ENCODE measurements at regions of chr19 and their contacts with region 1.

Region 1: GRCh38 chr19:49676690-49677231 is 310 bp upstream of the PRMT1 start:
- DNase-seq: peak; percentile 99 to 100
- H3K4me3 ChIP-seq: peak overlapping the region; percentile 82 to 99 (median 86)
- H3K27ac ChIP-seq: peak overlapping the region; percentile 100
- H3K4me1 ChIP-seq: peaks cover 2 to 19% (median 11%) of the 10 kb centered on the region in 4 experiments
- H3K27me3 ChIP-seq: no peaks in the 10 kb centered on the region
- CTCF ChIP-seq: no peak
- EP300 ChIP-seq: no peak
- POLR2A ChIP-seq: no peak
- RAD21 ChIP-seq: no peak

Region 2: GRCh38 chr19:49497047-49497788 is 179.5 kb before region 1 on chr19:
- CTCF ChIA-PET with region 1: interaction called, 3 read pairs
- POLR2A ChIA-PET with region 1: interaction called, 15 read pairs
- DNase-seq: no peak
- H3K4me3 ChIP-seq: peak overlapping the region; percentile 91 to 99 (median 98)
- H3K27ac ChIP-seq: peak overlapping the region; percentile 85
- H3K4me1 ChIP-seq: peaks cover 0 to 32% (median 23%) of the 10 kb centered on the region in 4 experiments; a peak in 6 of 7 replicates
- H3K27me3 ChIP-seq: no peaks in the 10 kb centered on the region
- CTCF ChIP-seq: no peak
- EP300 ChIP-seq: no peak
- POLR2A ChIP-seq: peak in 1 of 2 experiments; percentile 77; a peak in 2 of 3 replicates
- RAD21 ChIP-seq: no peak

Region 3: DNA sequence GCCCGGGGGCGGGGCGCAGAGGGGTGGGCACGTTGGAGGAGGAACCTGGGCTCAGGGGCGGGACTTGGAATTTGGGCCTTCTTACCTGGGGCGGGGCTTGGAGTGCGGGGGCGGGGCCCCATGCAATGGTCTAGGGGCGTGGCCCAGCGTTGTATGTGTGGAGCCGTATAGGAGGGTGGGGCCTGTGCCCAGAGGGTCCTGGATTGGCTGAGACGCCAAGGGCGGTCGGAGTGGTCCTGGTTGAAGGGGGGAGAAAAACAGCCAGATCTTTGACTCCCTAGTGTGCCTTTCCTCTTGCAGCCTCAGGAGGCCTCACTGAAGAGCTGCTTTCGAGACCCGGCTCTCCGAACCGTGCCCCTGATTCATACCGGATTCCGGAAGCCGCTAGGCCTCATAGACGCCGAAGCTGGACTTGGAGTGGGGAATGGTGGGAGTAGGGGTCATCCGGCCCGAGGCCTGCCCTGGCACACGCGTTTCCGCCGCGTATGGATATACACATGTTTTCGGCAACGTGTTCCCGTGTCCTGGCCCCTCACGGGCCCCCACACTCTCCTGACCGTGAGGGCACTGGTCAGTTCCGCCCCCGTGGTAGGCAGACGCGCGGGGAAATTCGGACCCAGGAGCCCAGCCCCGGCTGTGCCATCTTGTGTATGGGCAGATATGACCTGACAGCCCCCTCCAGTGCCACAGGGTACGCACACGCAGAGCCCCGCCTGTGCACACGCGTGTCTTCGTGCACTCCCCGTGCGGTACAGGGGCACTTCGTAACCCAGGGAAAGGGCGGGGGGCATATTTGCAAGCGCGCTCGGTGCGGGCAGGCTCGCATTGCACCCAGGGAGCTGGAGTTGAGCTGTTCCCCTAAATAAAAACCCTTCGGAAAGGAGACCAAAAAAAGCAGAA is 86.4 kb before region 1 on chr19:
- CTCF ChIA-PET with region 1: interaction called, 5 read pairs
- POLR2A ChIA-PET with region 1: interaction called, 29 read pairs
- DNase-seq: peak; percentile 98 to 99
- H3K4me3 ChIP-seq: peak overlapping the region; percentile 83 to 100 (median 93)
- H3K27ac ChIP-seq: peak overlapping the region; percentile 84
- H3K4me1 ChIP-seq: peaks cover 4 to 10% (median 5%) of the 10 kb centered on the region in 4 experiments; a peak in 6 of 7 replicates
- H3K27me3 ChIP-seq: no peaks in the 10 kb centered on the region
- CTCF ChIP-seq: peak in 1 of 3 experiments; percentile 8; a peak in 1 of 4 replicates
- EP300 ChIP-seq: no peak
- POLR2A ChIP-seq: peak; percentile 81 to 90
- RAD21 ChIP-seq: no peak

Region 4: GRCh38 chr19:49646486-49646985 is 30.2 kb before region 1 on chr19:
- CTCF ChIA-PET with region 1: interaction called, 14 read pairs
- POLR2A ChIA-PET with region 1: interaction called, 84 read pairs
- DNase-seq: no peak
- H3K4me3 ChIP-seq: no peak overlapping the region
- H3K27ac ChIP-seq: no peak overlapping the region
- H3K4me1 ChIP-seq: peaks cover 2 to 7% (median 4%) of the 10 kb centered on the region in 4 experiments; a peak in 6 of 7 replicates
- H3K27me3 ChIP-seq: no peaks in the 10 kb centered on the region
- CTCF ChIP-seq: no peak
- EP300 ChIP-seq: no peak
- POLR2A ChIP-seq: no peak
- RAD21 ChIP-seq: no peak

Region 5: GRCh38 chr19:49665351-49666119 is 11.2 kb before region 1 on chr19 and contains the starts of genes BCL2L12 and IRF3:
- CTCF ChIA-PET with region 1: interaction called, 28 read pairs
- POLR2A ChIA-PET with region 1: interaction called, 275 read pairs
- DNase-seq: peak; percentile 86 to 98
- H3K4me3 ChIP-seq: peak within 1 kb of the TSS; percentile 89 to 98 (median 96)
- H3K27ac ChIP-seq: peak within 1 kb of the TSS; percentile 72
- H3K4me1 ChIP-seq: peaks cover 0 to 7% (median 2%) of the 10 kb centered on the region in 4 experiments; a peak in 4 of 7 replicates
- H3K27me3 ChIP-seq: no peaks in the 10 kb centered on the region
- CTCF ChIP-seq: no peak
- EP300 ChIP-seq: no peak
- POLR2A ChIP-seq: no peak
- RAD21 ChIP-seq: no peak
- total RNA-seq, gene BCL2L12: 126 and 133 TPM in 2 replicates
- total RNA-seq, gene IRF3: 114 and 115 TPM in 2 replicates

Region 6: GRCh38 chr19:49782515-49782914 is 105.8 kb after region 1 on chr19:
- CTCF ChIA-PET with region 1: no interaction called
- POLR2A ChIA-PET with region 1: no interaction called
- DNase-seq: no peak
- H3K4me3 ChIP-seq: no peak overlapping the region
- H3K27ac ChIP-seq: no peak overlapping the region
- H3K4me1 ChIP-seq: no peaks in the 10 kb centered on the region; a peak in 2 of 7 replicates
- H3K27me3 ChIP-seq: no peaks in the 10 kb centered on the region
- CTCF ChIP-seq: no peak
- EP300 ChIP-seq: no peak
- POLR2A ChIP-seq: no peak
- RAD21 ChIP-seq: no peak

Measured in H1 (cell line).